Left ventricle myocardium inferior (tissue), 1 donor: ENCODE measurements at regions of chr5 and their contacts with region 1.

Region 1: DNA sequence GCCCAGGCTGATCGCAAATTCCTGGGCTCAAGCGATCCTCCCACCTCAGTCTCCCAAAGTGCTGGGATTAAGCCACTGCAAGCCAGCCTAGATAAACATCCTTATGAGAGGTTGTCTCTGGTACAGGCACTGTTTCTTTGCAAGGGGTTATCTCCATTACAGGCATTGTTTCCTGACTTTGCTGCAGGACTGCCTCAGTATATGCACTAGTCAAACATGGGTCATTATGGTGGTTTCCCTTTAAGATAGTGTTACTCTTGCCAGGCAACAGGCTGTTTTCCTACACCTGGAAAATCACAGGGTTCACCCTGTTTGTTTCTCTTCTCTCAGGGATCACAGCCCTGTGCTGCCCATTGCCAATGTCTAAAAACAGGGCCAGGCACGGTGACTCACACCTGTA is 7.8 kb upstream of the CLTB start:
- DNase-seq: no peak
- H3K4me3 ChIP-seq: no peak overlapping the region
- H3K27ac ChIP-seq: no peak overlapping the region
- H3K4me1 ChIP-seq: no peaks in the 10 kb centered on the region
- H3K27me3 ChIP-seq: peaks cover 13% of the 10 kb centered on the region
- CTCF ChIP-seq: no peak

Region 2: GRCh38 chr5:176589039-176589769 is 165.0 kb after region 1 on chr5:
- intact Hi-C with region 1: loop called (anchors 5 kb)
- DNase-seq: no peak
- H3K4me3 ChIP-seq: no peak overlapping the region
- H3K27ac ChIP-seq: no peak overlapping the region
- H3K4me1 ChIP-seq: no peaks in the 10 kb centered on the region
- H3K27me3 ChIP-seq: peaks cover 16% of the 10 kb centered on the region
- CTCF ChIP-seq: no peak